Sigmoid colon (tissue), 7 donors: ENCODE measurements at regions of chr4 and their contacts with region 1.

Region 1: GRCh38 chr4:7811536-7812191 is 128.0 kb downstream of the AFAP1 start:
- DNase-seq: peak; percentile 92
- H3K4me3 ChIP-seq: peak overlapping the region in 3 of 4 donors; percentile 8 to 21 (median 15)
- H3K27ac ChIP-seq: peak overlapping the region; percentile 81 to 86 (median 86)
- H3K4me1 ChIP-seq: peaks cover 0 to 80% (median 60%) of the 10 kb centered on the region in 4 donors
- H3K27me3 ChIP-seq: no peaks in the 10 kb centered on the region
- CTCF ChIP-seq: no peak
- EP300 ChIP-seq: no peak
- POLR2A ChIP-seq: no peak

Region 2: DNA sequence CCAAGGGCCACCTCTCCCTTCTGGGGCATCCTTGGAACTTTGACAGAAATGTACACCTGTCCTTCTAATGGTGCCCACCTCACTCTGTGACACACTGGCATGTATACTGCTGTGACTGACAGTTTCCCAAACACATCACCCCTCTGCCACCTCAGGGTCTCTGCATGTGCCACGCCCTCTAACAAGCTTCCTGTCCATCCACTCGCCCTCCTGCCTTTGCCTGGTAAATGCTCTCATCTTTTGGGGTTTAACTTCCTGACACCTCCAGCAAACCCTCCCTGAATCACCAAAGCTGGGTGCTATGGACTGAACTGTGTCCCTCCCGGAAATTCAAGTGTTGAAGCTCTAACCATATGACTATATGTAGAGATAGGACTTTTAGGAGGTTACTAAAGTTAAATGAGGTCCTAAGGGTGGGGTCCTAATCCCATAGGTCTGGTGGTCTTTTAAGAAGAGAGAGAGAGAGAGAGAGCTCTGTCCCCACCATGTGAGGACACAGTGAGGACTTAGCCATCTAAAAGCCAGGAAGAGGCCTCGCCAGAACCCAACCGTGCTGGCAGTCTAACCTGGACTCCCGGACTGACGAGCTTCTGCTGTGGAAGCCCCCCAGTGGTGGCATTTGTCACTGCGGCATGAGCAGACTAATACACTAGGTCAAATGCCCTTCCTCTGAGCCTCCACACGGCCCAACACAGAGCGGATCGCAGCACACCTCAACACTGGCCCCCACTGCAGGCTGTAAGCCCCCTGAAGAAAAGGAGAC is 32.3 kb after region 1 on chr4:
- intact Hi-C with region 1: loop called (anchors 2 kb)
- DNase-seq: peak; percentile 86
- H3K4me3 ChIP-seq: no peak overlapping the region
- H3K27ac ChIP-seq: peak overlapping the region; percentile 87 to 92 (median 92)
- H3K4me1 ChIP-seq: peaks cover 0 to 54% (median 52%) of the 10 kb centered on the region in 4 donors
- H3K27me3 ChIP-seq: no peaks in the 10 kb centered on the region
- CTCF ChIP-seq: peak; percentile 17 to 65 (median 34)
- EP300 ChIP-seq: no peak
- POLR2A ChIP-seq: no peak